Activated T-helper 1 cell treated with anti-CD3 and anti-CD28 coated beads, Interleukin-12 subunit alpha, Interleukin-12 subunit beta, Interleukin-2, Interleukin-4 antibody, amounts not matched to agents 30 ng/mL and 10 ng/mL and 1 ng/mL, durations not matched to agents 14 hours and 24 hours and 36 hours (primary cell): ENCODE measurements at regions of chr16 and their contacts with region 1.

Region 1: DNA sequence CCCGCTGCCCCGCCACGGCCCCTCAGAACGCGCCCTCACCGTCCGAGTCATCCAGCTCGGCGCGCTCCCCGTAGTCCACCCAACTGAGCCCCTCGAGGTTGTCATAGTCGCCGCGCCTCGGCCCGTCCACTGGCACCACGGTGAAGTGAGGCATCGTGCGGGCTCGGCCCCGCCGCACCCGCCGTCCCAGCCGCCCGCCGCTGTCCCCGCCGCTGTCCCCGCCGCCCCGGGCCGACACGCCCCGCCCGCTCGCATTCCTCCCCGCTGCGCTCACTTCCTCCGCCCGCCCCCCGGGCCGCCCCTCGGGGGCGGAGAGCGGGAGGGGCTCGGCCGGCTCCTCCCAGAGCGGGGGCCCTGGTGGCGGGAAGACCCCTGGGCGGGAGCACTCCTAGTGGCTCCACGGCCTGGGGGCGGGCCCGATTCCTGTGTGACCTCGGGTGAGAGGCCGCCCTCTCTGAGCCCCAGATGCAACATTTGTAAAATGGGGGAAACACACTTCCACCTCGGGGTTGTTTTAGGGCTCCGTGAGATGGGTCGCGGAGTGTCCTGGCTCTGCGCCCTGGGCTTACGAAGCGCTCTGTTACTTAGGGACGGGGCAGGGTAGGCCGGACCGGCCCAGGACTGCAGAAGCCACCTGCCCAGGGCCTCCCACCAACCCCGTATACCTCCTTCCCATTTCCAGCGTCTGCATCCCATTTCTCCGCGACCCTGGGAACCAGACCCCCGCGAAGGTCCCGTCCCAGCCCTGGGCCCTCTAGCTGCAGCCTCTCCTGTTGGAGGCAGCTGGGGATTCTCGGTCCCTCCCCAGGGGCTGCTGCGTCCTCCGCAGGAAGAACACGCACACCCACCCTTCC is at the start of gene SLC12A4:
- DNase-seq: peak; percentile 89
- H3K4me3 Mint-ChIP-seq: peak within 1 kb of the TSS; percentile 99
- H3K27ac Mint-ChIP-seq: peak within 1 kb of the TSS; percentile 96
- H3K4me1 Mint-ChIP-seq: peaks cover 40% of the 10 kb centered on the region
- H3K27me3 Mint-ChIP-seq: no peaks in the 10 kb centered on the region
- total RNA-seq, gene SLC12A4: 40.0 and 43.1 TPM in 2 replicates

Region 2: GRCh38 chr16:67719048-67719777 is 249.4 kb before region 1 on chr16 and contains the start of gene GFOD2:
- intact Hi-C with region 1: loop called (anchors 2 kb)
- DNase-seq: peak; percentile 97
- H3K4me3 Mint-ChIP-seq: peak within 1 kb of the TSS; percentile 96
- H3K27ac Mint-ChIP-seq: peak within 1 kb of the TSS; percentile 94
- H3K4me1 Mint-ChIP-seq: peaks cover 33% of the 10 kb centered on the region
- H3K27me3 Mint-ChIP-seq: no peaks in the 10 kb centered on the region
- total RNA-seq, gene GFOD2: 19.6 and 20.3 TPM in 2 replicates

Region 3: GRCh38 chr16:67806428-67807147 is 162.0 kb before region 1 on chr16 and contains the starts of genes RANBP10 and TSNAXIP1:
- intact Hi-C with region 1: loop called (anchors 2 kb)
- DNase-seq: peak; percentile 96
- H3K4me3 Mint-ChIP-seq: peak within 1 kb of the TSS; percentile 90
- H3K27ac Mint-ChIP-seq: peak within 1 kb of the TSS; percentile 86
- H3K4me1 Mint-ChIP-seq: peaks cover 35% of the 10 kb centered on the region
- H3K27me3 Mint-ChIP-seq: peaks cover 3% of the 10 kb centered on the region
- total RNA-seq, gene RANBP10: 23.0 and 25.7 TPM in 2 replicates
- total RNA-seq, gene TSNAXIP1: 0.52 and 0.83 TPM in 2 replicates

Region 4: GRCh38 chr16:67872786-67873537 is 95.7 kb before region 1 on chr16 and contains the start of gene EDC4:
- intact Hi-C with region 1: loop called (anchors 1 kb)
- DNase-seq: peak; percentile 89
- H3K4me3 Mint-ChIP-seq: peak within 1 kb of the TSS; percentile 88
- H3K27ac Mint-ChIP-seq: peak within 1 kb of the TSS; percentile 81
- H3K4me1 Mint-ChIP-seq: peaks cover 35% of the 10 kb centered on the region
- H3K27me3 Mint-ChIP-seq: no peaks in the 10 kb centered on the region
- total RNA-seq, gene EDC4: 115 and 128 TPM in 2 replicates

Region 5: DNA sequence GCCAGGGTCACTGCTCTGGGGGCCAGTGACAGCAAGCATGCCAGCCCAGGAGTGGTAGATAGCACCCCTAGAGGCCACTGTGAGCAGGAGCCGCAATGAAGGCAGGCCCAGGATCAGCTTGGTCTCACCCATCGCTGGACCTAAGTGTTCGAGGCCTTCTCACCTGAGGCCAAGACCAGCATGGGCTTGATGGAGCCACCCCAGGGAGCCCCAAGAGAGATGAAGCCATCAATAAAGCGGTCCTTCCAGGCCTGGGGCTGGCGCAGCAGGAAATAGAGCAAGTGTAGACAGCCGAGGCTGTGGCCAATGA is 26.5 kb before region 1 on chr16:
- intact Hi-C with region 1: no loop called
- DNase-seq: no peak
- H3K4me3 Mint-ChIP-seq: no peak overlapping the region
- H3K27ac Mint-ChIP-seq: peak overlapping the region; percentile 55
- H3K4me1 Mint-ChIP-seq: peaks cover 29% of the 10 kb centered on the region
- H3K27me3 Mint-ChIP-seq: no peaks in the 10 kb centered on the region

Region 6: GRCh38 chr16:67979955-67980678 is 11.5 kb after region 1 on chr16 and contains the start of gene DPEP3:
- intact Hi-C with region 1: loop called (anchors 1 kb)
- DNase-seq: no peak
- H3K4me3 Mint-ChIP-seq: no peak within 1 kb of the TSS
- H3K27ac Mint-ChIP-seq: no peak within 1 kb of the TSS
- H3K4me1 Mint-ChIP-seq: peaks cover 17% of the 10 kb centered on the region
- H3K27me3 Mint-ChIP-seq: no peaks in the 10 kb centered on the region
- total RNA-seq, gene DPEP3: not detected in 2 replicates

Region 7: DNA sequence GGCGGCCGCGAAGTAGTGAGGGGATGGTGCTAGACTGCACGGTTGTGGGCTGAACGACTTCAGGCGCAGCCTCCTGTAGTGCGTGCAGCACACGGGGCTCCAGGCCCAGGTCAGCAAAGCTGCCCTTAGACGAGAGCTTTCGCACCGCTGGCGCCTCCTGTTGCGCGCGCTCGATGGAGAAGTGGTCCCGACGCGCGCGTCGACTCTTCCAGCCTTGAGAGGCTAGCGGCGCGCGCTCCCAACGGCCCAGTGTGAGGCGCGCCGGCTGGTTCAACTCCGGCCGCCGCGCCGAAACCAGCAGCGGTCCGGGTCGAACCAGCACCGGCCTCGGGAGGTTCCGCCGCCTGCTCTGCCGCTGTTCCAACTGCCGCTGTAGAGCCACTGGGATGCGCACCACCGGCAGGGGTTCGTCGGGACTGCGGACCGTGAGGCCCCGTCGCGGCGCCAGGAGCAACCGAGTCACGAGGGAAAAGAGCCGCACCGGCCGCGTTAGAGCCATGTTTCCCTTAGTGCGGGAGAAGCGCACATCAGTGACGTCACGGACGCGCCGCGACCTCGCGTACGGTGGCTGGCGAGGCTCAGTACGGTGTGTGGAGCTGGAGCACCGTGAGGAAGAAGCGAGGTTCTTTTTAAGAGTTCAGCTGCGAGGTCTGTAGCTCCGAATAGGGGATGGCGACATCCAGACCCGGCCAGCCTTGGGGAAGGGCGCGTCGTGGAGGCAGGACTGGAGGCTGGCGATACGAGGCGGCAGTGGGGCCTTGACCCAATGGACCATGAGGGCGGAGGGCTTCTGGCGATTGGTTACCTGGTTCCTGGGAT is 54.3 kb after region 1 on chr16 and contains the starts of genes DDX28 and DUS2:
- intact Hi-C with region 1: loop called (anchors 1 kb)
- DNase-seq: peak; percentile 93
- H3K4me3 Mint-ChIP-seq: peak within 1 kb of the TSS; percentile 100
- H3K27ac Mint-ChIP-seq: peak within 1 kb of the TSS; percentile 96
- H3K4me1 Mint-ChIP-seq: peaks cover 26% of the 10 kb centered on the region
- H3K27me3 Mint-ChIP-seq: no peaks in the 10 kb centered on the region
- total RNA-seq, gene DDX28: 28.2 and 28.4 TPM in 2 replicates
- total RNA-seq, gene DUS2: 34.7 and 37.2 TPM in 2 replicates